Activated CD8-positive, alpha-beta T cell treated with anti-CD3 and anti-CD28 coated beads for 36 hours (primary cell): ENCODE measurements at regions of chr12 and their contacts with region 1.

Region 1: DNA sequence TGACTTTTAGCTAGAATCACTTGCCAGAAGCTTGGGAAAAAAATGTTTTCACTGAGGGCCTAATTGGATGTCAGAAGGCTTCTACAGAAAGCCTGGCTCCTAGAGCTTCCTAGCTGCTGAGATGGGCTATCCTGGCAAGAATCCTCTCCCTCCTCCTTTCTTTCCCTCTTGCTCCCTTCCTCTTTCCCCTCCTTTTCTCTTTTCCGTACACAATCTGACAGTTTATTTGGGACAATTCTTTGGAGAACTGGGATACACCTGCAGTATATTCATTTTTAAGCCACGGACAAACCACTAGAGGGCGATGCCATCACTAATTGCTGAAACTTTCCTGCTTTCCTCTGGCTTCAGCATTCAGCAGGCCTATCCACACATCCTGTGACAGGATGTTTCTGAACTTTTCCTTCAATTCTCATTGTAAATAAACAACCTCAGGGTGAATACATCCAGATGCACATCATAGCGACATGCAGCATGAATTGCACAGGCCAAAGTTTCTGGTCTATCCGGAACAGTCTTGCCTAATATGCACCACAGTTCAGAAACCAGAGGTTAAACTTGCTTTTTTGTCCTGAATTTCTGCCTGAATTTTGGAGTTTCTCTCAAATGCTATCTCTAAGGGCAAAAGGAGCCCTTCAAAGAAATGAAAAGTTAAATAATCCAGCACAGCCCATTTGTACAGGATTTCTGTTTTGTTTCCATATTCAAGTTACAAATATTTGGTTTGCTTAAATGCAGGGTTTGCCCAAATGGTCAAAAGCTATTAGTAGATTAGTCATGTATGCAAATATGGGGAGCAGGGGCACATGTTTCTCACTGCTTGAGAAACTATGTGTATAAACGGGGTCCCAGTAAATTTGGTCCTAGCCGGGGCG is 142.8 kb downstream of the PAWR start:
- DNase-seq: peak; percentile 41
- ATAC-seq: no peak
- H3K4me3 Mint-ChIP-seq: no peak overlapping the region
- H3K27ac Mint-ChIP-seq: no peak overlapping the region
- H3K4me1 Mint-ChIP-seq: no peaks in the 10 kb centered on the region
- H3K27me3 Mint-ChIP-seq: peaks cover 1% of the 10 kb centered on the region
- CTCF ChIP-seq: peak; percentile 79

Region 2: GRCh38 chr12:79573820-79574219 is 25.8 kb after region 1 on chr12:
- CTCF ChIA-PET with region 1: no interaction called
- POLR2A ChIA-PET with region 1: no interaction called
- intact Hi-C with region 1: no loop called
- DNase-seq: no peak
- ATAC-seq: no peak
- H3K4me3 Mint-ChIP-seq: no peak overlapping the region
- H3K27ac Mint-ChIP-seq: no peak overlapping the region
- H3K4me1 Mint-ChIP-seq: no peaks in the 10 kb centered on the region
- H3K27me3 Mint-ChIP-seq: no peaks in the 10 kb centered on the region
- CTCF ChIP-seq: no peak

Region 3: DNA sequence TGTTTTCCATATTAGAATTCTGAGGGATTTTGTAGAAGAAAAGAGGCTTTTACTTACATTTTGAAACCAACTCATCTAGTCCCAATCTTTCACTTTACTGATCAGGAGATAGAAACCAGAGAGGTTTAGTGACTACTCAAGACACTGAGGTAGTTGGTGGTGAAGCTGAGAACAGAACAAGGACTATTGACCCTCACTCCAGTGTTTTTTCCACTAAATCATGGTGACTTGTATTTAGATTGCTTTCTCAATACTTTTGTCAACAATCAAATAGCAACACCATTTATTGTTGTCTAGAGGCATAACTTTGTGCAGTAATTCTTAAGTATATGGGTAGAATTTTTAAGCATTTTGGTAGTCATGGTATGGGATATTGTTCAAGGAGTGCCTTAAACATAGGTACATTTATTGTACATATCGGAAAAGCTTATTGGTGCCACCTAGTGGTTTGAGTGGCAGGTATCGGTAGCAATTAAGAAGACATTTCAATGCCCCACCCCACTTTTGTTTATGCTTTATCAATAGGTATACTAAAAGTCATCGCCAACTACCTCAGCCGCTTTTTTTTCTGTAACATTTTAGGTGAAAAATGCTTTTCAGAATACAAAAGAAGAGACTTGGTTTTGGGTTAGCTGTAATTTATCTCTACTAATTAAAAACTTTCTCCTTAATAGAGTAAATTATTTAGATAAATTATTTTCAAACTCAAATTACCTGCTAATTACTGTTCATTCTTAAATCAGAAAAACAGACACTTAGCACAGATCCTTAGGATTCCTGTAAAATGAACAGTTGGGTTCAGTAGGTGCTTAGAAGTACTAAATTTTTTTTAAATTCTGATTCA is 190.1 kb after region 1 on chr12:
- CTCF ChIA-PET with region 1: interaction called, 6 read pairs
- POLR2A ChIA-PET with region 1: no interaction called
- intact Hi-C with region 1: loop called (anchors 5 kb)
- DNase-seq: peak; percentile 56
- ATAC-seq: peak; percentile 34
- H3K4me3 Mint-ChIP-seq: no peak overlapping the region
- H3K27ac Mint-ChIP-seq: no peak overlapping the region
- H3K4me1 Mint-ChIP-seq: no peaks in the 10 kb centered on the region
- H3K27me3 Mint-ChIP-seq: peaks cover 8% of the 10 kb centered on the region
- CTCF ChIP-seq: peak; percentile 71